Cardiac septum (tissue), 1 donor: ENCODE measurements at regions of chr9 and their contacts with region 1.

Region 1: GRCh38 chr9:130107234-130107861 is 53.6 kb downstream of the GPR107 start:
- DNase-seq: peak; percentile 83

Region 2: DNA sequence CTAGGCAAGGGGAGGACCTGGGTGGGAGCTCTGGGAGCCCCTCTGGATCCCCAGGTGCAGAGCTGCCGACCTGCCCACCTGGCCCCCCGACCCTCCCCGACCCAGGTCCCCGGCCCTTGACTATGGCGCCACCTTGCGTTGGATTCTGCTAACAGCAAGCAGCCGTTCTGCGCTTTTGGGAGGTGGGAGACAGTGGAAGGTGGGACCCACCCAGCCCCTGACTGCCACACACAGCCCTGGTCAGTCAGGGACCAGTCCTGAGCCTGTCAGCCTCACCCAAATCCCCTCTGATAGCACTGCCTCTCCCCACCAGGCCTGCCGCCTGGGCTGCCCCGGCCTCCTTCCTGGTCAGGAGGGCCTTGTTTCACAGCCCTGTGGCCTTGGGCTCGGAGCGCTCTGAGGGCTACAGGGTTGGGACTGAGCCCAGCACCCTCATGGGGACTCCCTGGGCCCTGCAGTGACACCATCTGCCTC is 236.1 kb after region 1 on chr9:
- intact Hi-C with region 1: loop called (anchors 5 kb)
- DNase-seq: no peak